ENCODE measurements at regions of chr3 and their contacts with region 1.

Region 1: GRCh38 chr3:30286007-30286669 is 320.3 kb upstream of the TGFBR2 start:
- DNase-seq: peak; percentile 70
- ATAC-seq: peak; percentile 95

Region 2: GRCh38 chr3:30231277-30232141 is 54.6 kb before region 1 on chr3:
- intact Hi-C with region 1: loop called (anchors 5 kb)
- DNase-seq: no peak
- ATAC-seq: peak; percentile 66

Region 3: GRCh38 chr3:30342319-30343060 is 56.4 kb after region 1 on chr3:
- intact Hi-C with region 1: loop called (anchors 2 kb)
- DNase-seq: no peak
- ATAC-seq: peak; percentile 94